Activated CD4-positive, alpha-beta memory T cell treated with anti-CD3 and anti-CD28 coated beads for 36 hours (primary cell): ENCODE measurements at regions of chr19 and their contacts with region 1.

Region 1: GRCh38 chr19:45692187-45693105 is at the start of gene QPCTL:
- DNase-seq: peak; percentile 99
- H3K4me3 Mint-ChIP-seq: peak within 1 kb of the TSS; percentile 97
- H3K27ac Mint-ChIP-seq: peak within 1 kb of the TSS; percentile 94
- H3K4me1 Mint-ChIP-seq: peaks cover 21% of the 10 kb centered on the region
- H3K27me3 Mint-ChIP-seq: no peaks in the 10 kb centered on the region
- total RNA-seq, gene QPCTL: 13.8 to 16.8 TPM

Region 2: DNA sequence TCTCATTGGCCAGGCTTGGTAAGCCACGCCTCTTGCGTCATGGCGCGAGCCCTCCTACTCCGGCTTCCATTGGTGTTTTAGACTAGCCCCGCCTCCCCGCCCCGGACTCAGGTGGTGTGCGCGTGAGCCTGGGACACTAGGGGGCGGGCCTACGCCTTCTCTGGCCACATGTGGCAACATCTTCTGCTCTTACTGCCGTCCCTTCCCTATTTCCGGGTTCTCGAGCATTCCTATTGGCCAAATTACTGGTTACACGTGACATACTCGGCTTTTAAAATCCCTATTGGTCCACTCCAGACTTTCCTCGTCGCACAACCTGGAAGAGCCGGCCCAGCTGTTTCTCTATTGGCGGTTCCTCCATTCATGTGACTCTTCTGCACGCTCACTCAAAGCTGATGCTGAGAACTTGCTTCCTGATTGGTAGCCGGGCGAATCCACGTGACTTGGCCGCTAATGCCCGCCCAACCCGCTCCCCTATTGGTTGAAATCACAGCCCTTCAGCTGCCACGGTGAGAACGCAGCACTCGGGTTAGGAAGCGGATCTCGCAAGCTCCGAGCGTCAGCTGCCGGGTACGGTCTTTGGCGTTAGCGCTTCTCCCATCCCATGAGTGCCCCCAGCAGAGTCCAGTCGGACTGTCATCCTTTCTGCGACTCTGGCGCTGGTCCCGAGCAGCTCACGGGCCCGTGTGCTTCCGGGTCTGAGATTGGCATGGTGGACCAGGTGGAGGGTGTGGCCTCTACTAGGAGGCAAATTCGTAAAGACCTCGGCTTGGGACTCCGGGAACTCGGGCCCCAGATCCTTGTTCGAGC is 514.0 kb before region 1 on chr19 and contains the start of gene BLOC1S3:
- CTCF ChIA-PET with region 1: no interaction called
- POLR2A ChIA-PET with region 1: no interaction called
- intact Hi-C with region 1: loop called (anchors 1 kb)
- DNase-seq: peak; percentile 100
- H3K4me3 Mint-ChIP-seq: peak within 1 kb of the TSS; percentile 94
- H3K27ac Mint-ChIP-seq: peak within 1 kb of the TSS; percentile 92
- H3K4me1 Mint-ChIP-seq: peaks cover 40% of the 10 kb centered on the region
- H3K27me3 Mint-ChIP-seq: no peaks in the 10 kb centered on the region
- total RNA-seq, gene BLOC1S3: 10.4 to 11.8 TPM

Region 3: GRCh38 chr19:45584332-45585157 is 107.9 kb before region 1 on chr19 and contains the start of gene OPA3:
- CTCF ChIA-PET with region 1: interaction called, 5 read pairs
- POLR2A ChIA-PET with region 1: no interaction called
- intact Hi-C with region 1: loop called (anchors 1 kb)
- DNase-seq: peak; percentile 100
- H3K4me3 Mint-ChIP-seq: peak within 1 kb of the TSS; percentile 96
- H3K27ac Mint-ChIP-seq: peak within 1 kb of the TSS; percentile 97
- H3K4me1 Mint-ChIP-seq: peaks cover 11% of the 10 kb centered on the region
- H3K27me3 Mint-ChIP-seq: peaks cover 1% of the 10 kb centered on the region
- total RNA-seq, gene OPA3: 10.8 to 11.0 TPM

Region 4: GRCh38 chr19:45681391-45682015 is 10.9 kb before region 1 on chr19:
- CTCF ChIA-PET with region 1: interaction called, 77 read pairs
- POLR2A ChIA-PET with region 1: interaction called, 8 read pairs
- intact Hi-C with region 1: loop called (anchors 1 kb)
- DNase-seq: peak; percentile 93
- H3K4me3 Mint-ChIP-seq: peak overlapping the region; percentile 73
- H3K27ac Mint-ChIP-seq: no peak overlapping the region
- H3K4me1 Mint-ChIP-seq: peaks cover 19% of the 10 kb centered on the region
- H3K27me3 Mint-ChIP-seq: no peaks in the 10 kb centered on the region

Region 5: GRCh38 chr19:45717166-45717982 is 24.9 kb after region 1 on chr19:
- CTCF ChIA-PET with region 1: interaction called, 68 read pairs
- POLR2A ChIA-PET with region 1: interaction called, 31 read pairs
- intact Hi-C with region 1: loop called (anchors 1 kb)
- DNase-seq: peak; percentile 99
- H3K4me3 Mint-ChIP-seq: peak overlapping the region; percentile 96
- H3K27ac Mint-ChIP-seq: peak overlapping the region; percentile 93
- H3K4me1 Mint-ChIP-seq: peaks cover 39% of the 10 kb centered on the region
- H3K27me3 Mint-ChIP-seq: no peaks in the 10 kb centered on the region

Region 6: GRCh38 chr19:45798995-45799517 is 106.6 kb after region 1 on chr19:
- CTCF ChIA-PET with region 1: interaction called, 14 read pairs
- POLR2A ChIA-PET with region 1: no interaction called
- intact Hi-C with region 1: no loop called
- DNase-seq: peak; percentile 71
- H3K4me3 Mint-ChIP-seq: peak overlapping the region; percentile 3
- H3K27ac Mint-ChIP-seq: peak overlapping the region; percentile 23
- H3K4me1 Mint-ChIP-seq: peaks cover 10% of the 10 kb centered on the region
- H3K27me3 Mint-ChIP-seq: peaks cover 34% of the 10 kb centered on the region